Dendritic cell treated with granulocyte-macrophage colony-stimulating factor and Interleukin-4, amounts not matched to agents 40 ng/mL and 50 ng/mL, for 4 days (primary cell): ENCODE measurements at regions of chr15 and their contacts with region 1.

Region 1: GRCh38 chr15:43225201-43225949 is 4.6 kb upstream of the EPB42 start:
- H3K4me3 Mint-ChIP-seq: no peak overlapping the region
- H3K27ac Mint-ChIP-seq: no peak overlapping the region
- H3K4me1 Mint-ChIP-seq: no peaks in the 10 kb centered on the region
- H3K27me3 Mint-ChIP-seq: peaks cover 26% of the 10 kb centered on the region

Region 2: DNA sequence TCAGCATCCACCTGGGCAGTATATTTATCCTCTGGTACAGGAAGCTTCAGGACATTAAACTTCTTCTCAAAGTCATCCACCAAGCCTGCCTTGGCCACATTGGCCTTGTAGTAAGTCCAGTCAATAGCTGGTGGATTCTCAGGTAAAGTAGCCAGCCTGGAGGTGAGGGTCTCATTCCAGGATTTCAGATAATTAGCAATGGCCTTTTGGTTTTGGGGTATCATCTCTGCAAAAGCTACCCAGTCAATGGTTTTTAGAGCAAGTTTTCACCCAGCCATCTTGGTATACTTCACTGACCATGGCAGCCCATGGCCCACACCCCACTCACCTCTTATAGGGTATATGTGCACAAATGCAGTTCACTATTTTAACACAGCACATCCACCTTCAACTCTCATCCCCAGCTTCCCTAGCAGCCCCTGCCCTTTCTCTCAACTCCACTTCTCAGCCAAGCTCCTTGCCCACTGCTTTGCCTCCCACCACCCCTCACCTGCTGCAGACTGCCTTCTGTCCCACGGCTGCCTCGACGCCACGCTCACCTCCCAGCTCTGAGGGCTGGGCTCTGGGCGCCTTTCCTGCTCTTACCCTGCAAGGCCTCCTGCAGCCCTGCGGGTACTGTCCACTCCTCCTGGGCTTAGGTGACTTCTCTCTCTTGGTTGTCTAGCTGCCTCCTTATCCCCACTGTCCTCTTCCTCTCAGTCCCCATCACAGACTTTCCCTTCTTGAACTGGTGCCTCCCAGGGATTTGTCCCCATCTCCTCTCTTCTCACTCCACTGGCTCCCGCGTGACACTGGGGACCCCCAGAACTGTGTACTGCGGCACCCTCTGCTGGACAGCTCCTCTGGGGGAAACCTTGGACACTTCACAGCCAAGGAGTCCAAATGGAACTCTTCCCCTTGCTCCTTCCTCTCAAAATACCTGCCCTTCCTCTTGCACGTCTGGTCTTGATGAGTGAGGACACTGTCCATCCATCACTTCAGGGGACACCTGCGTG is 43.0 kb after region 1 on chr15:
- intact Hi-C with region 1: loop called (anchors 5 kb)
- H3K4me3 Mint-ChIP-seq: no peak overlapping the region
- H3K27ac Mint-ChIP-seq: no peak overlapping the region
- H3K4me1 Mint-ChIP-seq: peaks cover 12% of the 10 kb centered on the region
- H3K27me3 Mint-ChIP-seq: peaks cover 29% of the 10 kb centered on the region

Region 3: DNA sequence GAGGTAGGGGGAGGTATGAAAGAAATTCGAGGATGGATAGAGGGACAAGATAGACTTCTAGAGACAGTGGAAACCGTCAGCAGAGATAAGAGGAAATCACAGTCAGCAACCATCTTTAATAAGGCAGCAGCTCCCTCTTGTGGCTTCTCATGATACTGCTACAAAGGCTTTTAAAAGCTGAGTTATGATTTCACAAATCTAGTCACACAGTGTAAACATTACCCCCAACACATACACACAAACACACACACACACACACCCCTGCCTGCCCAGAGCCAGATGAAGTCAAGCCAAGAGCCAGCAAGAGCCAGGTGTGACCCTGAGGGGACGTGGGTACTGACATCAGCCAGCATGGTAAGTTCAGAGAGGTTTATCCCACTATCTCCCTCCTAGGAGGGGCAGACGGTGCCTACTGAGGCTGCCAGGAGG is 60.2 kb after region 1 on chr15:
- intact Hi-C with region 1: loop called (anchors 1 kb)
- H3K4me3 Mint-ChIP-seq: no peak overlapping the region
- H3K27ac Mint-ChIP-seq: no peak overlapping the region
- H3K4me1 Mint-ChIP-seq: peaks cover 17% of the 10 kb centered on the region
- H3K27me3 Mint-ChIP-seq: peaks cover 9% of the 10 kb centered on the region